B cell (primary cell): ENCODE measurements at regions of chr17 and their contacts with region 1.

Region 1: GRCh38 chr17:42577532-42578281 is at the start of gene PSMC3IP:
- DNase-seq: peak; percentile 94
- ATAC-seq: peak; percentile 93
- H3K4me3 ChIP-seq: peak within 1 kb of the TSS; percentile 56 to 82 (median 74)
- H3K4me3 Mint-ChIP-seq: peak within 1 kb of the TSS; percentile 99
- H3K27ac ChIP-seq: peak within 1 kb of the TSS; percentile 45 to 72
- H3K27ac Mint-ChIP-seq: peak within 1 kb of the TSS; percentile 99
- H3K4me1 ChIP-seq: peaks cover 12 to 30% of the 10 kb centered on the region in 2 donors
- H3K4me1 Mint-ChIP-seq: peaks cover 42% of the 10 kb centered on the region
- H3K27me3 ChIP-seq: no peaks in the 10 kb centered on the region
- H3K27me3 Mint-ChIP-seq: no peaks in the 10 kb centered on the region
- CTCF ChIP-seq: no peak
- total RNA-seq, gene PSMC3IP: 7.9 and 10.4 TPM in 2 replicates

Region 2: DNA sequence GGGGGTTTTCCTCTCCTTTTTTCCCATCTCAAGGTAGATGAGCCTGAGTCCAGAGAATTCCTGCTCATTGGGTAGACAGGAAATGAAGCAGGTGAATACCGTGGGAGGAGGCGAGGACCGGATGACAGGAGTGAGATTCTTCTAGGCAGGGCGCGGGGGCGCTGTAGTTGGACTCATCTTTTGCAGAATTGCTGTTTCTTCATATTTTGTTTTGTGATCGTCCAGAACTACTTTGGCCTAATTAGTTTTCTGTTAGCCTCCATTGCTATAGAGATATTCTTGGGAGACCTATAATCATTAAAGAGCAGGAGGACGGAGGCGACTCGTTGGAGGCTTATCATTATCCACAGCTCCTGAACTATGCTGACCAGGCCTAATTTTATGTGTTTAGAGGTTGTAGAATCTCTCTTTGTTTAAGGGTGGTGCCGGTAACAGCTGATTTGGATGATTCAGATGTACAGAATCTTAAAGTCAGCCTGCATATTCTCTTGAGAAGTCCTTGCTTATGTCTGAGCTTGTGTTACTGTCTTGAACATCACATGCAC is 118.4 kb before region 1 on chr17:
- CTCF ChIA-PET with region 1: no interaction called
- POLR2A ChIA-PET with region 1: no interaction called
- intact Hi-C with region 1: no loop called
- DNase-seq: peak; percentile 44
- ATAC-seq: no peak
- H3K4me3 ChIP-seq: peak overlapping the region; percentile 67 to 97 (median 95)
- H3K4me3 Mint-ChIP-seq: peak overlapping the region; percentile 97
- H3K27ac ChIP-seq: peak overlapping the region; percentile 78 to 84
- H3K27ac Mint-ChIP-seq: peak overlapping the region; percentile 93
- H3K4me1 ChIP-seq: peaks cover 52 to 61% of the 10 kb centered on the region in 2 donors
- H3K4me1 Mint-ChIP-seq: peaks cover 59% of the 10 kb centered on the region
- H3K27me3 ChIP-seq: no peaks in the 10 kb centered on the region
- H3K27me3 Mint-ChIP-seq: no peaks in the 10 kb centered on the region
- CTCF ChIP-seq: peak; percentile 6

Region 3: GRCh38 chr17:42548070-42548837 is 29.5 kb before region 1 on chr17:
- CTCF ChIA-PET with region 1: interaction called, 39 read pairs
- POLR2A ChIA-PET with region 1: interaction called, 12 read pairs
- intact Hi-C with region 1: loop called (anchors 1 kb)
- DNase-seq: peak; percentile 89
- ATAC-seq: peak; percentile 97
- H3K4me3 ChIP-seq: peak overlapping the region in 4 of 5 experiments; percentile 45 to 66 (median 53)
- H3K4me3 Mint-ChIP-seq: peak overlapping the region; percentile 74
- H3K27ac ChIP-seq: no peak overlapping the region
- H3K27ac Mint-ChIP-seq: no peak overlapping the region
- H3K4me1 ChIP-seq: peaks cover 10 to 18% of the 10 kb centered on the region in 2 donors
- H3K4me1 Mint-ChIP-seq: peaks cover 17% of the 10 kb centered on the region
- H3K27me3 ChIP-seq: no peaks in the 10 kb centered on the region
- H3K27me3 Mint-ChIP-seq: no peaks in the 10 kb centered on the region
- CTCF ChIP-seq: peak; percentile 74

Region 4: GRCh38 chr17:42603318-42603717 is 25.6 kb after region 1 on chr17:
- CTCF ChIA-PET with region 1: interaction called, 35 read pairs
- POLR2A ChIA-PET with region 1: interaction called, 19 read pairs
- intact Hi-C with region 1: no loop called
- DNase-seq: peak; percentile 37
- ATAC-seq: peak; percentile 49
- H3K4me3 ChIP-seq: no peak overlapping the region
- H3K4me3 Mint-ChIP-seq: peak overlapping the region; percentile 2
- H3K27ac ChIP-seq: peak overlapping the region in 1 of 2 donors; percentile 49
- H3K27ac Mint-ChIP-seq: peak overlapping the region; percentile 67
- H3K4me1 ChIP-seq: peaks cover 51% of the 10 kb centered on the region in 2 donors
- H3K4me1 Mint-ChIP-seq: peaks cover 64% of the 10 kb centered on the region
- H3K27me3 ChIP-seq: no peaks in the 10 kb centered on the region
- H3K27me3 Mint-ChIP-seq: no peaks in the 10 kb centered on the region
- CTCF ChIP-seq: no peak

Region 5: DNA sequence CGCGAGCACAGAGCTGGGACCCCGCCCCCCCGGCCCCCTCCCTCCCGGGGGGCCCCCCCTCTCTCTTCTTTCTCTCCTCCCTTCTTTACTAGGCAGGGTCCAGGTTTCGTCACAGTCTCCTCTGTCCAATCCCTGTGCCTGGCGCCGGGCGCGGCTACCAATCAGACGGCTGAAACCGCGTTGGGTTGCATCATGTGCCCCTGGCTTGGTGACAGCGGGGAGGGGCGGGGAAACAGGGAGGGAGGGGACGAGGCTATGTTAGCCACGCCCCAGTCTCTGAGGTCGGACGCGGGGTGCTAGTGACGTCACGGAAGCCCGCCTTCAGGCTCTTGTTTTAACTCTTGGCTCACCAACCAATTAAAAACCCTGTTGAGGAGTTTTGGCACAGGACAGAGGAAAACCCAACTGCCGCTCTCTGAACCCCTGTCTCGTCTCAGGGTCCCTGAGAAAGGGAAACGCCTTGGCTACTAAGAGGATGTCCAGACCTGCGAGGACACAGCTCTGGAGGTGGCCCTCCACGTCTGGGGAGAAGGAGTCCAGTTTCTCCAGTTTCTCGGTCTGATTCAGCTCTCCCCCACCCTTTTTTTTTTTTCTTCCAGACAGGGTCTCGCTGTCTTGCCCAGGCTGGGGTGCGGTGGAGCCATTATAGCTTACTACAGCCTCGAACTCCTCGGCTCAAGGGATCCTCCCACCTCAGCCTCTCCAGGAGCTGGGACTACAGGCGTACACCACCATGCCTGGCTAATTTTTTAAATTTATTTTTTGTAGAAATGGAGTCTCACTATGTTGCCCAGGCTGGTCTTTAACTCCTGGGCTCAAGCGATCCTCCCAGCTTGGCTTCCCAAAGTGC is 99.5 kb after region 1 on chr17:
- CTCF ChIA-PET with region 1: interaction called, 72 read pairs
- POLR2A ChIA-PET with region 1: interaction called, 13 read pairs
- intact Hi-C with region 1: loop called (anchors 1 kb)
- DNase-seq: peak; percentile 99
- ATAC-seq: peak; percentile 77
- H3K4me3 ChIP-seq: peak overlapping the region; percentile 53 to 75 (median 65)
- H3K4me3 Mint-ChIP-seq: peak overlapping the region; percentile 92
- H3K27ac ChIP-seq: no peak overlapping the region
- H3K27ac Mint-ChIP-seq: peak overlapping the region; percentile 86
- H3K4me1 ChIP-seq: peaks cover 72 to 80% of the 10 kb centered on the region in 2 donors
- H3K4me1 Mint-ChIP-seq: peaks cover 62% of the 10 kb centered on the region
- H3K27me3 ChIP-seq: peaks cover 0 to 67% (median 29%) of the 10 kb centered on the region in 4 experiments
- H3K27me3 Mint-ChIP-seq: peaks cover 14% of the 10 kb centered on the region
- CTCF ChIP-seq: no peak

Region 6: GRCh38 chr17:42773290-42774035 is 195.8 kb after region 1 on chr17 and contains the start of gene VPS25:
- CTCF ChIA-PET with region 1: interaction called, 17 read pairs
- POLR2A ChIA-PET with region 1: interaction called, 9 read pairs
- intact Hi-C with region 1: no loop called
- DNase-seq: peak; percentile 87
- ATAC-seq: peak; percentile 89
- H3K4me3 ChIP-seq: peak within 1 kb of the TSS; percentile 71 to 88 (median 82)
- H3K4me3 Mint-ChIP-seq: peak within 1 kb of the TSS; percentile 99
- H3K27ac ChIP-seq: peak within 1 kb of the TSS; percentile 81 to 85
- H3K27ac Mint-ChIP-seq: peak within 1 kb of the TSS; percentile 98
- H3K4me1 ChIP-seq: peaks cover 16 to 17% of the 10 kb centered on the region in 2 donors
- H3K4me1 Mint-ChIP-seq: peaks cover 23% of the 10 kb centered on the region
- H3K27me3 ChIP-seq: no peaks in the 10 kb centered on the region
- H3K27me3 Mint-ChIP-seq: no peaks in the 10 kb centered on the region
- CTCF ChIP-seq: no peak
- total RNA-seq, gene VPS25: 38.7 and 38.8 TPM in 2 replicates

Region 7: GRCh38 chr17:42850954-42851353 is 273.2 kb after region 1 on chr17 and contains the start of gene AOC3:
- CTCF ChIA-PET with region 1: no interaction called
- POLR2A ChIA-PET with region 1: no interaction called
- intact Hi-C with region 1: no loop called
- DNase-seq: no peak
- ATAC-seq: no peak
- H3K4me3 ChIP-seq: no peak within 1 kb of the TSS
- H3K4me3 Mint-ChIP-seq: no peak within 1 kb of the TSS
- H3K27ac ChIP-seq: no peak within 1 kb of the TSS
- H3K27ac Mint-ChIP-seq: no peak within 1 kb of the TSS
- H3K4me1 ChIP-seq: no peaks in the 10 kb centered on the region
- H3K4me1 Mint-ChIP-seq: no peaks in the 10 kb centered on the region
- H3K27me3 ChIP-seq: peaks cover 0 to 3% (median 0%) of the 10 kb centered on the region in 4 experiments
- H3K27me3 Mint-ChIP-seq: no peaks in the 10 kb centered on the region
- CTCF ChIP-seq: no peak
- total RNA-seq, gene AOC3: 0.75 and 1.2 TPM in 2 replicates